ENCODE measurements at regions of chr11 and their contacts with region 1.

Region 1: GRCh38 chr11:119381181-119381988 is at the start of gene USP2:
- DNase-seq: peak; percentile 97
- ATAC-seq: peak; percentile 99
- H3K4me3 Mint-ChIP-seq: no peak within 1 kb of the TSS
- H3K27ac Mint-ChIP-seq: no peak within 1 kb of the TSS
- H3K4me1 Mint-ChIP-seq: peaks cover 7% of the 10 kb centered on the region
- H3K27me3 Mint-ChIP-seq: no peaks in the 10 kb centered on the region
- CTCF ChIP-seq: peak; percentile 88
- total RNA-seq, gene USP2: 0.61 to 0.96 TPM

Region 2: GRCh38 chr11:119363851-119364590 is 17.4 kb before region 1 on chr11:
- CTCF ChIA-PET with region 1: interaction called, 241 read pairs
- POLR2A ChIA-PET with region 1: interaction called, 3 read pairs
- intact Hi-C with region 1: no loop called
- DNase-seq: peak; percentile 50
- ATAC-seq: peak; percentile 85
- H3K4me3 Mint-ChIP-seq: no peak overlapping the region
- H3K27ac Mint-ChIP-seq: no peak overlapping the region
- H3K4me1 Mint-ChIP-seq: peaks cover 8% of the 10 kb centered on the region
- H3K27me3 Mint-ChIP-seq: peaks cover 46% of the 10 kb centered on the region
- CTCF ChIP-seq: no peak

Region 3: GRCh38 chr11:119438599-119438998 is 57.2 kb after region 1 on chr11:
- CTCF ChIA-PET with region 1: no interaction called
- POLR2A ChIA-PET with region 1: no interaction called
- intact Hi-C with region 1: no loop called
- DNase-seq: no peak
- ATAC-seq: no peak
- H3K4me3 Mint-ChIP-seq: no peak overlapping the region
- H3K27ac Mint-ChIP-seq: no peak overlapping the region
- H3K4me1 Mint-ChIP-seq: peaks cover 10% of the 10 kb centered on the region
- H3K27me3 Mint-ChIP-seq: peaks cover 20% of the 10 kb centered on the region
- CTCF ChIP-seq: no peak